ENCODE measurements at regions of chr1 and their contacts with region 1.

Region 1: DNA sequence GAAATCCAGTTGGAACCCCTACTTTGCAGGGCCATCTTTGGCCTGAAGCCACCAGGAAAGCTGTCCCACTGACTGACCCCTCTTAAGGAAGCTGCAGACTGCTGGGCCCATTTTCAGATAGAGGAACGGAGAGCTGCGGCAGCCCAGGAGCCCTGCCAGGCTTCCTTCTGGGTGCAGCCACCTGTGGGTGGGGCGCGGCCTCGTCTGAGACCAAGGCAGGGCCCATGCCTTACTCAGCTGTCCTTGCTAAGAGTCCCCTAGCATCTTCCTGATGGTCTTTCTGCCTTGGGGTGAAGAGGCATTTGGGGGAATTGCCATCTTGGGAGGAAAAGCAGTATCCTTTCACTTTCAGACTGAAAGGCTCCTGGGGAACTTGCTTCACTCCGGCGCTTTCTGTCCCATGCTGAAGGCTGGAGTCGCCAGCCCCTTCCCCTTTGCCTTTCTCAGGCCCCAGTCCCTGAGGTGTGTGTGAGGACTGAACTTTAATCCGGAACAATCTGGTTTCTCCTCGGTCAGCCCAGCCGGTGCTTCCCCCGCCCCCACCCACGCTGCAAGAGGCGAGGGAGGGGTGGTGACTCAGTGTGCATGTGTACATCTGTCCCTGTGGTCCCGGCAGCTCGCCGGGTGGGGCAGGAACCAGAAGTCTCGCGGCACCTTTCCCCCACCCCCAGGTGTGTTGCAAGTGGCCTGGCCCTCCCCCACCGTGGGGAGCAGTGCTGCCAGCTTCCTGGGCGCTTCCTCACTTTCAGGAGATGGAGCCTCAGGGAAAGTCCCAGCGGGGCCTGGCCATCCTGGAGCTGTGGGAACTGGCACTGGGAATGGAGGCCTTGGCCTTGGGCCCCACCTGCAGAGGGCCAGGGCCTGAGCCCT is 5.1 kb downstream of the ZC3H12A start:
- DNase-seq: peak; percentile 82 to 97 (median 84)
- H3K4me3 ChIP-seq: peak overlapping the region; percentile 85 to 96
- H3K4me3 Mint-ChIP-seq: peak overlapping the region; percentile 95 to 99 (median 97)
- H3K27ac ChIP-seq: peak overlapping the region; percentile 96
- H3K27ac Mint-ChIP-seq: peak overlapping the region; percentile 97 to 100 (median 99)
- H3K4me1 ChIP-seq: peaks cover 39% of the 10 kb centered on the region
- H3K4me1 Mint-ChIP-seq: peaks cover 15 to 62% (median 32%) of the 10 kb centered on the region in 4 donors
- H3K27me3 ChIP-seq: no peaks in the 10 kb centered on the region
- H3K27me3 Mint-ChIP-seq: no peaks in the 10 kb centered on the region

Region 2: DNA sequence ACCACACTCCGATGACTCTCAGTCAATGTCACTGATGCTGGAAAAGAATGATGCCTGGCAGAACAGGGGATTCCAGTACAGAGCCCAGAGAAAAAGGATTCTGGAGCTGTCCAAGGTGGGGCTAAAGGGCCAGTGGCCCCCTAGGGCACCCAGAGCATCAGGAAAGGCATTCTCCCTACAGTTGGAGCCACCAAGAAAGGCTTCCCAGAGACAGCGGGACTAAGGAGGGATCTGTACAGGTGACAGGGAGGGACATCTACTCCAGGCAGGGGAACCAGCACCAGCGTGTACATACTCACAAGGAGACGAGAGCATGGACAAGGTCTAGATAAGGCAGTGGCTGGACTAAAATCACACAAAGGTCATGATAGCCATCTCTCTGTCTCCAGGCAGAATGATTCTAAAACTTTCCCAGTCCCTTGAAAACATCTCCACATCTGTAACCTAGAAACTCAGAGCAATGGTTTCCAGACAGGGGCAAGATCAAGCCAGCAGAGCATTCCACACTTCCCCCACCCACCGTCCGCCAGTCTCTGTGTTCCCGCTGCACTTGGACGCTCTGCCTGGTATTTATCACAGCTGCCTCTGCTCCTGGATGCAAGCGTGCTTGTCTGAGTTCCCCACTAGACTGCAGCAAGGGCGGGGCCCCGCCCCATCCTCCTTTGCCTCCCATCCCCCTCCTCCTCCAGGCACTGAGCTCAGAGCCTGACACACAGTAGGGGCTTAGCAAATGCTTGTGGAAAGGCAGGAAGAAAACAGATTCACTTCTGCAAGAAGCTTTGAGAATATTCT is 116.7 kb before region 1 on chr1:
- CTCF ChIA-PET with region 1: no interaction called
- POLR2A ChIA-PET with region 1: no interaction called
- intact Hi-C with region 1: no loop called
- DNase-seq: no peak
- H3K4me3 ChIP-seq: no peak overlapping the region
- H3K4me3 Mint-ChIP-seq: no peak overlapping the region
- H3K27ac ChIP-seq: no peak overlapping the region
- H3K27ac Mint-ChIP-seq: no peak overlapping the region
- H3K4me1 ChIP-seq: no peaks in the 10 kb centered on the region
- H3K4me1 Mint-ChIP-seq: no peaks in the 10 kb centered on the region
- H3K27me3 ChIP-seq: no peaks in the 10 kb centered on the region
- H3K27me3 Mint-ChIP-seq: peaks cover 20 to 31% of the 10 kb centered on the region in 2 donors

Region 3: GRCh38 chr1:37387859-37388258 is 91.6 kb before region 1 on chr1:
- CTCF ChIA-PET with region 1: no interaction called
- POLR2A ChIA-PET with region 1: no interaction called
- intact Hi-C with region 1: no loop called
- DNase-seq: no peak
- H3K4me3 ChIP-seq: no peak overlapping the region
- H3K4me3 Mint-ChIP-seq: no peak overlapping the region
- H3K27ac ChIP-seq: no peak overlapping the region
- H3K27ac Mint-ChIP-seq: peak overlapping the region in 1 of 7 donors; percentile 15
- H3K4me1 ChIP-seq: no peaks in the 10 kb centered on the region
- H3K4me1 Mint-ChIP-seq: no peaks in the 10 kb centered on the region
- H3K27me3 ChIP-seq: no peaks in the 10 kb centered on the region
- H3K27me3 Mint-ChIP-seq: peaks cover 11 to 13% of the 10 kb centered on the region in 2 donors

Region 4: DNA sequence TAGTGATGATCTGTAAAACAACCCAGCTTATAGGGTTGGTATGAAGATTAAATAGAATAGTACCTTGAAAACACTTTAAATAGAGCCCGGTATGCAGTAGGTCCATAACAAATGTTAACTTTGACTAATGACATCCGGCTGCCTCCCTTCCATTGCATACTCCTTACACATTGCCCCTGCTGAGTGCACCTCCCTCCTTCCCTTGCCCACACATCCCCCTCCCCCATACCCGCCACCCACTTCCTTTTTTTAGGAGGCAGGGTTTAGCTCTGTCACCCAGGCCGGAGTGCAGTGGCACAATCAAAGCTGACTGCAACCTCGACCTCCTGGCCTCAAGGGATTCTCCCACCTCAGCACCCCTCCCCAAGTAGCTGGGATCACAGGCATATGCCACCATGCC is 29.6 kb before region 1 on chr1:
- CTCF ChIA-PET with region 1: interaction called, 417 read pairs
- POLR2A ChIA-PET with region 1: interaction called, 102 read pairs
- intact Hi-C with region 1: loop called (anchors 2 kb)
- DNase-seq: peak in 3 of 5 donors; percentile 13 to 22 (median 16)
- H3K4me3 ChIP-seq: no peak overlapping the region
- H3K4me3 Mint-ChIP-seq: peak overlapping the region in 2 of 8 donors; percentile 17 to 42
- H3K27ac ChIP-seq: no peak overlapping the region
- H3K27ac Mint-ChIP-seq: peak overlapping the region in 1 of 7 donors; percentile 70
- H3K4me1 ChIP-seq: peaks cover 10% of the 10 kb centered on the region
- H3K4me1 Mint-ChIP-seq: peaks cover 4 to 14% (median 7%) of the 10 kb centered on the region in 4 donors
- H3K27me3 ChIP-seq: no peaks in the 10 kb centered on the region
- H3K27me3 Mint-ChIP-seq: peaks cover 4 to 8% of the 10 kb centered on the region in 2 donors

Region 5: GRCh38 chr1:37465593-37466517 is 13.6 kb before region 1 on chr1:
- CTCF ChIA-PET with region 1: interaction called, 417 read pairs
- POLR2A ChIA-PET with region 1: interaction called, 229 read pairs
- intact Hi-C with region 1: no loop called
- DNase-seq: no peak
- H3K4me3 ChIP-seq: no peak overlapping the region
- H3K4me3 Mint-ChIP-seq: no peak overlapping the region
- H3K27ac ChIP-seq: no peak overlapping the region
- H3K27ac Mint-ChIP-seq: no peak overlapping the region
- H3K4me1 ChIP-seq: no peaks in the 10 kb centered on the region
- H3K4me1 Mint-ChIP-seq: peaks cover 6 to 10% (median 7%) of the 10 kb centered on the region in 4 donors
- H3K27me3 ChIP-seq: no peaks in the 10 kb centered on the region
- H3K27me3 Mint-ChIP-seq: no peaks in the 10 kb centered on the region

Region 6: DNA sequence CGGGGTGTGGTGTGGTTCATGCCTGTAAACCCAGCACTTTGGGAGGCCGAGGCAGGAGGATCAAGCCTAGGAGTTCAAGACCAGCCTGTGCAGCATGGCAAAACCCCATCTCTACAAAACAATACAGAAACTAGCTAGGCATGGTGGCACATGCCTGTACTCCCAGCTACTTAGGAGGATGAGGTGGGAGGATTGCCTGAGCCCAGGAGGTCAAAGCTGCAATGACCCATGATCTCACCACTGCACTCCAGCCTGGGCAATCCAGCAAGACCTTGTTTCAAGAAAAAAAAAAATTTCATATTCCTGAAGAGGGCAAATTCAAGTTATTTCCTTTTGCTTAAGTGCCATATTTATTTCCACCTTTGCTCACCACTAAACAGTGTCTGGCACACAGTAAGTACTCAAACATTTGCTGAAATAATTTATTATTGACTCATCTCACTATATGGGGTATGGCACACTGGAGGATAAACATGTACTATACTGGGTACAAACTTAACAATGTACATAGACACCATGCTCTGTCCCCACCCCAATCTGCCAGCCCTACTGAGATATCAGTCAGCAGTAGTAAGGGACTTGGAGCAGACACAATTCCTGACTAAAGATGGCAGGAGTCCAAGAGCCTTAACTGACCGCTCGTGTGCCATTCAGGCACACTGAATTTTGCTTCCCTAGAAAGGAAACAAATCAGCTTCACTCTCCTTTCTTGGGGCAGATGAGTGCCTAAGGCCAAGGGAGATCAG is 19.6 kb after region 1 on chr1:
- CTCF ChIA-PET with region 1: interaction called, 65 read pairs
- POLR2A ChIA-PET with region 1: interaction called, 13 read pairs
- intact Hi-C with region 1: no loop called
- DNase-seq: no peak
- H3K4me3 ChIP-seq: no peak overlapping the region
- H3K4me3 Mint-ChIP-seq: no peak overlapping the region
- H3K27ac ChIP-seq: no peak overlapping the region
- H3K27ac Mint-ChIP-seq: peak overlapping the region in 3 of 7 donors; percentile 27 to 48 (median 30)
- H3K4me1 ChIP-seq: no peaks in the 10 kb centered on the region
- H3K4me1 Mint-ChIP-seq: peaks cover 8 to 15% (median 13%) of the 10 kb centered on the region in 4 donors
- H3K27me3 ChIP-seq: no peaks in the 10 kb centered on the region
- H3K27me3 Mint-ChIP-seq: no peaks in the 10 kb centered on the region

Region 7: DNA sequence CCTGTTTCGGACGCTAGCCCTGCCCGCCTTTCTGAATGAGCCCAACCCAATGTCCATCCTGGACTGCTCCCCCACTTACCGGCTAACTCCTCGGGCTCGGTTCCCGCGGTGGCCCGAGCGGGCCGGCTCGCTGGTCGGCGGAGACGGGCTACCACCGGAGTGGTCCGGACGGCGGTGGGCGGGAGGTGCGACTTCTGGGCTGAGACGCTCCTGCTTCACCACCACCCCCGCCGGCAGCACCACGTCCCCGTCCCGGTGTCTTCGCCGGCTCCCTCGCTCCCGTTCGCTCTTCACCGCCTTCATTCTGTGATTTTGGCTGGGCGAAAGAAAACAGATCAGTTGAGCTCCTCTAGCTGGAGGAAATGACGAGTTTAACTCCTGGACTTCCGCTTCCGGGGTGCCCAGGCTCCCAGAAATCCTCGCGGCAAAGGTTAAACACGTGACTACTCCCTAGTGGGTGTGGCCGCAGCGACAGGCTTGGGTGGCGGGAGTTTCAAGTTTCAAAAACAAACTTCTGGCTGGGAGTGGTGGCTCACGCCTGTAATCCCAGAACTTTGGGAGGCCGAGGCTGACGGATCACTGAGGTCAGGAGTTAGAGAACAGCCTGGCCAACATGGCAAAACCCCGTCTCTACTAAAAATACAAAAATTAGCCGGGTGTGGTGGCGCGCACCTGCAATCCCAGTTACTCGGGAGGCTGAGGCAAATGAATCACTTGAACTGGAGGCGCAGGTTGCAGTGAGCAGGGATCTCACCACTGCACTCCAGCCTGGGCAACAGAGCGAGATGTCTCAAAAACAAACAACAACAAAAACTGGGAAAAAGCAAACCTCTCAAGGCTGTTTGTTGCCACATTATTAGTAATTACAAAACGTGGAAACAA is 74.7 kb after region 1 on chr1 and contains the start of gene SNIP1:
- CTCF ChIA-PET with region 1: no interaction called
- POLR2A ChIA-PET with region 1: interaction called, 12 read pairs
- intact Hi-C with region 1: no loop called
- DNase-seq: peak; percentile 90 to 96 (median 92)
- H3K4me3 ChIP-seq: peak within 1 kb of the TSS; percentile 96 to 99
- H3K4me3 Mint-ChIP-seq: peak within 1 kb of the TSS; percentile 95 to 100 (median 98)
- H3K27ac ChIP-seq: peak within 1 kb of the TSS; percentile 96
- H3K27ac Mint-ChIP-seq: peak within 1 kb of the TSS; percentile 81 to 100 (median 98)
- H3K4me1 ChIP-seq: peaks cover 30% of the 10 kb centered on the region
- H3K4me1 Mint-ChIP-seq: peaks cover 26 to 49% (median 36%) of the 10 kb centered on the region in 4 donors
- H3K27me3 ChIP-seq: no peaks in the 10 kb centered on the region
- H3K27me3 Mint-ChIP-seq: no peaks in the 10 kb centered on the region
- total RNA-seq, gene SNIP1: 29.8 to 30.2 TPM

Region 8: DNA sequence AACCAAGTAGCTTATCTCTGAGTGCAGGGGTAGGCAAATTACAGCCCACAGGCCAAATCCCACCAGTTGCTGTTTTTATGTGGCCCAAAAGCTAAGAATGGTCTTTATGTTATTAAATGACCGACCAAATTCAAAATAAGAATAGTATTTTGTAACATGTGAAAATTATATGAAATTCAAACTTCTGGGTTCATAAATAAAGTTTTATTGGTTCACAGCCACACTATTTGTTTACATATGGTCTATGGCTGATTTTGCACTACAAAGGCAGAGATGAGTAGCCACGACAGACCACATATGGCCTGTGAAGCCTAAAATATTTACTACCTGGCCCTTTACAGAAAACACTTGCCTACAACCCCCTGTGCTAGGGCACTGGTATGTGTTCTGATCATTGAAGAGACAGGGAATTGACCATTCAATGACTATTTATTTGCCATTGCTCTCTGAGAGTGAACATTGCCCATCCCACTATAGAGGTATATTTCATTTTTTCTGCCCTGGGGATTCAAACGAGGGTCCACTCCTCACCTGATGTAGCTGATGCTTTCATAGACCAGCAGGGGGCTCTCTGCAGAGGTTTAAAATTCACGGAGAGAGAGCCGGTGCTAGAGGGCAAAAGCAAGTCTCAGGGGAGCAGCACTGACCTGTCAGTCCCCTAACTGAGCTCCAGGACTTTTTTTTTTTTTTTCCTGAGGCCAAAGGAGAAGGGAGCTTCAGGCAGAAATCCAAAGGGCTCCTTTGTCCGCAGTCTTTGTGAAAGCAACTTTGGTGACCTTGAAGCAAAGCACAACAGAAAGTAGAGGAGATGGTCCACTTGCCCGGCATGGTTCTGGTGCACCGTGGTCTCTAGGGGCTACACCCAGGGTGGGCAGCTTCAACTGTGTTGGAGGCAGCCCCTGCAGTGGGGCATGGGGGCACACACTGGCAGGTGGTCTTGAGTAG is 123.5 kb after region 1 on chr1:
- CTCF ChIA-PET with region 1: no interaction called
- POLR2A ChIA-PET with region 1: no interaction called
- intact Hi-C with region 1: no loop called
- DNase-seq: peak in 4 of 5 donors; percentile 47 to 58 (median 54)
- H3K4me3 ChIP-seq: no peak overlapping the region
- H3K4me3 Mint-ChIP-seq: no peak overlapping the region
- H3K27ac ChIP-seq: no peak overlapping the region
- H3K27ac Mint-ChIP-seq: peak overlapping the region in 1 of 7 donors; percentile 11
- H3K4me1 ChIP-seq: no peaks in the 10 kb centered on the region
- H3K4me1 Mint-ChIP-seq: peaks cover 0 to 7% (median 0%) of the 10 kb centered on the region in 4 donors
- H3K27me3 ChIP-seq: no peaks in the 10 kb centered on the region
- H3K27me3 Mint-ChIP-seq: peaks cover 5% of the 10 kb centered on the region in 2 donors

Region 9: DNA sequence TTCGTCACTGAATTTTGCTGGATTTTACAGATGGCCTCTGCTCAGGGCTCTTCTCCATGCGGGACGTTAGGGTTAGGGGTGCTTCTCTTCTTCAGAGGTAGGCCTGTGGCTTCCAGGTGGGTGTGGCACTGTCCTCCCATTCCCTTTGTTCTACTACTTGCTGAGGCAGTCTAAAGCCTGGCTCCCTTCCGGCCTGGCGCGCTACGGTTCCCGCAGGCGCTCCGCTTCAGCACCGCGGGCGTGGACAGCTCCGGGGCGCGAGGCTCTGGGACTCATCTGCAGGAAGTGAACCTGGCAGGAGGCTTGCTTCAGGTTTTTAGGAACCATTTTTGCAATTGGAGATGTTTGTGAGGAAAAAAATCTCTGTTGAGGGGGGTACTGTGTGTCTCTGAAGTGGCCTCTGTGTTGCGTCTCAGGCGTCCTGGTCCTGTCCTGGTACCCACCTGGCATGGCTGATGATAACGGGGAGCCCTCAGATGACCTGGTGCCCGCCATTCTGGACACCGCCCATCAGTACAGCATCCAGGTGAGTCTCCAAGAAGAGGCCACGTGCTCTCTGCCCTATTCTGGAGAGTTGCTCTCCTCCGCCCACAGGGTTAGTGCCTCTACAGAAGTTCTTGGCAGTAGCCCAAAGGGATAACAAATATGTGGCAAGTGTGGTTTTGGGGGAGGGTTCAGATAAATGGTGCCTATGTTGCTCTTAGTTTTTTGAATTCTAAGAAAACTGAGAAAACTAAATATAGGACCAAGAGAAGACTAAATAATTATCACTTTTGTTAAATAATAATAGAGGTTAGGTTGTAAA is 316.0 kb after region 1 on chr1:
- CTCF ChIA-PET with region 1: no interaction called
- POLR2A ChIA-PET with region 1: no interaction called
- intact Hi-C with region 1: no loop called
- DNase-seq: peak in 4 of 5 donors; percentile 27 to 49 (median 36)
- H3K4me3 ChIP-seq: no peak overlapping the region
- H3K4me3 Mint-ChIP-seq: peak overlapping the region; percentile 63 to 88 (median 77)
- H3K27ac ChIP-seq: no peak overlapping the region
- H3K27ac Mint-ChIP-seq: peak overlapping the region in 2 of 7 donors; percentile 59 to 73
- H3K4me1 ChIP-seq: peaks cover 13% of the 10 kb centered on the region
- H3K4me1 Mint-ChIP-seq: peaks cover 2 to 25% (median 13%) of the 10 kb centered on the region in 4 donors
- H3K27me3 ChIP-seq: no peaks in the 10 kb centered on the region
- H3K27me3 Mint-ChIP-seq: peaks cover 12 to 26% of the 10 kb centered on the region in 2 donors

Region 10: DNA sequence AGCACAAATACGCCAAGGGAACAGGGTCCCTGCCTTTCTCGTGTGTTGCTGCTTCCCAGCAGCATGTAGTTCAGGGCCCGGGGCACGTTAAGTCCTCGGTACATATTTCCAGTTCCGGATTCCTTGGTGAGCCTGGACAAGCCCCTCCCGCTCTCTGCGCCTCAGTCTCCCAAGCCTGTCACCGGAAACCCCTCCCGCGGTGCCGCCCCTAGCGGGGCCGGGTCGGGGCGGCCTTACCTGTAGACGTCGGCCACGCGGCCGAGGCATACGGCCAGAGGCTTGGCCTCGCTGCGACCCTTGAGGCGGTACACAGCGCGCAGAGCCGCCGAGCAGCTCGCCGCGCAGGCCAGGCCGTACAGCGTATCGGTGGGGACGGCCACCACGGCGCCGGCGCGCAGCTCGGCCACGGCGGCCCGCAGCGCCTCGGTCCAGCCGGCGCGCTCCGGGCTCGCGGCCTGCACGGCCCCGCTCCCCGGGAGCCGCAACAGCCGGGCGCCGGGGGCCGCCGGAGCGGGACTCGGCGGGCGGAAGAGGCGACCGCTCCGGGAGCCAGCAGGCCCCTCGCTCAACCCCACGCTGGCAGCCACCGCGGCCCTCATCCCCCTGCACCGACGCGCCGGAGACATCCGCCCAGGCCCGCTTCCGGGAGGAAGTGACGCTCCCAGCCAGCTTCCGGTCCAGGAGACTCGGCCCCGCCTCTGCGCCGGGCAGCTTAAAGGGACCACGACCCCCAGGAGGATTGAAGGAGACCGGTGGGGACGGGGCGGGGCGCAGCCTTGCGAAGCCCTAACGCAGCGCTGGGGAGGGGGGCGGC is 328.3 kb after region 1 on chr1 and contains the starts of genes C1orf122 and YRDC:
- CTCF ChIA-PET with region 1: no interaction called
- POLR2A ChIA-PET with region 1: interaction called, 4 read pairs
- intact Hi-C with region 1: loop called (anchors 5 kb)
- DNase-seq: peak; percentile 86 to 93 (median 88)
- H3K4me3 ChIP-seq: peak within 1 kb of the TSS; percentile 56 to 83
- H3K4me3 Mint-ChIP-seq: peak within 1 kb of the TSS; percentile 92 to 98 (median 96)
- H3K27ac ChIP-seq: peak within 1 kb of the TSS; percentile 89
- H3K27ac Mint-ChIP-seq: peak within 1 kb of the TSS; percentile 93 to 99 (median 98)
- H3K4me1 ChIP-seq: peaks cover 40% of the 10 kb centered on the region
- H3K4me1 Mint-ChIP-seq: peaks cover 13 to 57% (median 32%) of the 10 kb centered on the region in 4 donors
- H3K27me3 ChIP-seq: no peaks in the 10 kb centered on the region
- H3K27me3 Mint-ChIP-seq: no peaks in the 10 kb centered on the region
- total RNA-seq, gene C1orf122: 12.4 to 13.9 TPM
- total RNA-seq, gene YRDC: 13.8 to 14.1 TPM

Region 11: GRCh38 chr1:38990738-38991639 is 1511.5 kb after region 1 on chr1 and contains the start of gene AKIRIN1:
- CTCF ChIA-PET with region 1: no interaction called
- POLR2A ChIA-PET with region 1: no interaction called
- intact Hi-C with region 1: loop called (anchors 5 kb)
- DNase-seq: peak; percentile 87 to 95 (median 89)
- H3K4me3 ChIP-seq: peak within 1 kb of the TSS; percentile 52 to 67
- H3K4me3 Mint-ChIP-seq: peak within 1 kb of the TSS; percentile 88 to 94 (median 92)
- H3K27ac ChIP-seq: peak within 1 kb of the TSS; percentile 93
- H3K27ac Mint-ChIP-seq: peak within 1 kb of the TSS; percentile 87 to 93 (median 91)
- H3K4me1 ChIP-seq: peaks cover 47% of the 10 kb centered on the region
- H3K4me1 Mint-ChIP-seq: peaks cover 21 to 52% (median 37%) of the 10 kb centered on the region in 4 donors
- H3K27me3 ChIP-seq: no peaks in the 10 kb centered on the region
- H3K27me3 Mint-ChIP-seq: no peaks in the 10 kb centered on the region
- total RNA-seq, gene AKIRIN1: 79.6 to 84.9 TPM